Left cardiac atrium (tissue), 4 donors: ENCODE measurements at regions of chr9 and their contacts with region 1.

Region 1: DNA sequence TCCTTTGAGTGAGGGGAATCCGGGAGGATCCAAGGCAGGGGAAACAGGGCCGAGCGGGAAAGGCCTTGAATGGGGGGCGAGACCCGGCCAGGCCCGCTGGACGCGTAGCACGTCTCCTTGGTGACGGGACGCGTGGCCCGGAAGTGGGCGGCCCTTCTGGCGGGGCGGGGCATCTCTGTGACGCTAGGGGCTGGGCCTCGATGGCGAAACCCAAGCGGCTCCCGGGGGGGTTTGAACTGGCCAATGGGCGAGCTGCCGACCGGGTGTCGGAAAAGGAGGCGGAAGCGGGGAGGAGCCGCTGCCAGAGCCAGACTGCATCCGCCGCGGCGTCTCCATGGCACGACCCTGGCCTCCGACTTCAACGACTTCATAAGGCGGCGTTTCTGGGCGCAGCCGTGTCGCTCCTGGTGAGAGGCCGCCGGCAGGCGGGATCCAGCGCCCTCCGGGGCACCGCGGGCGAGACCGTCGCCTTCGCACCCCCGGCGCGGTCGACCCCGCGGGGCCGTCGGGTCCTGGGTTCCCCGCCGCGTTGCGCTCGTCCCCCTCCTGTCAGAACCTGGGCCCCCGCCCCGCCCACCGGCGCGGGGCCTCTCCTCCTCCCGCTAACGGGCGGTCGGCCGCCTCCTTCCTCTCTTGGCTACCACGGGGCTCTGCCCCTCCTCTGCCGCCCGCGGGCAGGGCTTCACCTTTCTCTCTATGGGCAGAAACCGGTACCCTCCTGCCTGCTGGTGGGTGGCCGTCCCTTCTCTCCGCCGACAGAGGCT is at the start of gene ODF2:
- DNase-seq: peak; percentile 98
- ATAC-seq: peak; percentile 96 to 97
- total RNA-seq, gene ODF2: 12.6 to 19.1 TPM

Region 2: DNA sequence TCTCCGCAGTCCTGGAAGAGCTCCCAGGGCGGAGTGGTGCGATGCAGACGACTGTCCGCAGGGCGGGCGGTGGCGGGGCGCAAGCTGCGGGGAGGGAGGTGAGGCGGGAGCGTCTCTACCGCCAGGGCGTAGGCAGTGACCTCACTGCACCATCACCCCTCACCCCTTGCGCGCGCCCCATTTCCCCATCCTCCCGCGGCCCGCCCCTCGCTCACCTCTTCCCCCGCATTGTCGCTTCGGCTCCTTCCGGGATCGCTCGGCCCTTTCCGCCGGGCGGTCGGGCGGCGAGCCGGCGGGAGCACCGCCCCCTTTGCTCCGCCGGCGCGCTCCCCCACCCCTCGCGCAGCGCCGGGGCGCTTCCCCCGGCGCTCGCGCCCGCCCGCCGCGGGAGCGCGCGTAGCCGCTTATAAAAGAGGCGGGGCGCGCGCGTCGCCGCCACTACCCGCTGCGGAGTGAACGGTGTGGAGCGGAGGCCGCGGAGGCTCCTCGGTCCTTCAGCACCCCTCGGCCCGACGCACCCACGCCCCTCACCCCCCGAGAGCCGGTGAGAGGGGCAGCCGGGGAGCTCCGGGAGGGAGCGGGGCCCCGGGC is 96.2 kb after region 1 on chr9 and contains the start of gene SPTAN1:
- intact Hi-C with region 1: loop called in 1 of 2 experiments (anchors 5 kb)
- DNase-seq: peak; percentile 92
- ATAC-seq: peak; percentile 89 to 92
- total RNA-seq, gene SPTAN1: 277 to 336 TPM